ENCODE measurements at regions of chr13 and their contacts with region 1.

Region 1: DNA sequence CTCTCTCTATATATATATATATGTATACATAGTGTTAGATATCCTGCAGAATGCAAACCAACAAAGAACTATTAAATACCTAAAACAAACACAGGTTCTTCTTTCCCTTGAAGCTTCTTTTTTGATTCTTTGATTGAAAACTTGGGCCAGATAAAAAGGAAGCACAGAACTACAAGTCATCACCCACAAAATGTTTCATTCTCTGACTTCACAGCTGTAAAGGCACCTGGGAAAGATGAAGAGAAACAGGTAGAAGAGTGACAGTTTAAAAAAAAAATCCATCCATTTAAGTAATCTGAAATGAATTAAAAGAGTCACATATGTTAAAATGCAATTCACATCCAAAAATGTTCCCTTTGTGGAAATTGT is 90.7 kb upstream of the FNDC3A start:
- DNase-seq: no peak
- H3K4me3 Mint-ChIP-seq: peak overlapping the region; percentile 39
- H3K27ac Mint-ChIP-seq: peak overlapping the region; percentile 51
- H3K4me1 Mint-ChIP-seq: peaks cover 45% of the 10 kb centered on the region
- H3K27me3 Mint-ChIP-seq: no peaks in the 10 kb centered on the region

Region 2: DNA sequence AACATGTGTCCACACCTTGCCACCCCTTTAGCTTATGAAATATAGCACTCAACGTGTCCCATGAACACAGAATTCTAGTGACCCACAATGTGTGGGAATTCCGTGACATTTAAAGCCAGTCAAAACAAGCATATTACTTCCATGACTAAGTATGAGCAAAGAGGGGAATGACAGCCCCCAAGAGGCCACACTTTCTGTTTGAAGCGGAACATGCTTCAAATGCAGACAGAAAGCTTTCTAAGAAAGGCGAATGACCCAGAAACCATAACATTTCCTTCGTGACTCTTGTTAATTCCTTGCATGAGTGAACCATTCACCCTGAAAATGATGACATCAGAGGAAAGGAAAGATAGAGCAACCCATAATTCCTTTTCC is 31.3 kb before region 1 on chr13:
- intact Hi-C with region 1: loop called (anchors 2 kb)
- DNase-seq: no peak
- H3K4me3 Mint-ChIP-seq: peak overlapping the region; percentile 25
- H3K27ac Mint-ChIP-seq: peak overlapping the region; percentile 67
- H3K4me1 Mint-ChIP-seq: peaks cover 28% of the 10 kb centered on the region
- H3K27me3 Mint-ChIP-seq: peaks cover 9% of the 10 kb centered on the region

Measured in activated CD4-positive, alpha-beta T cell treated with anti-CD3 and anti-CD28 coated beads, Interleukin-2, amount 10 ng/mL, durations not matched to agents 24 days and 14 days (primary cell).